Calu3 (cell line): ENCODE measurements at regions of chr10 and their contacts with region 1.

Region 1: DNA sequence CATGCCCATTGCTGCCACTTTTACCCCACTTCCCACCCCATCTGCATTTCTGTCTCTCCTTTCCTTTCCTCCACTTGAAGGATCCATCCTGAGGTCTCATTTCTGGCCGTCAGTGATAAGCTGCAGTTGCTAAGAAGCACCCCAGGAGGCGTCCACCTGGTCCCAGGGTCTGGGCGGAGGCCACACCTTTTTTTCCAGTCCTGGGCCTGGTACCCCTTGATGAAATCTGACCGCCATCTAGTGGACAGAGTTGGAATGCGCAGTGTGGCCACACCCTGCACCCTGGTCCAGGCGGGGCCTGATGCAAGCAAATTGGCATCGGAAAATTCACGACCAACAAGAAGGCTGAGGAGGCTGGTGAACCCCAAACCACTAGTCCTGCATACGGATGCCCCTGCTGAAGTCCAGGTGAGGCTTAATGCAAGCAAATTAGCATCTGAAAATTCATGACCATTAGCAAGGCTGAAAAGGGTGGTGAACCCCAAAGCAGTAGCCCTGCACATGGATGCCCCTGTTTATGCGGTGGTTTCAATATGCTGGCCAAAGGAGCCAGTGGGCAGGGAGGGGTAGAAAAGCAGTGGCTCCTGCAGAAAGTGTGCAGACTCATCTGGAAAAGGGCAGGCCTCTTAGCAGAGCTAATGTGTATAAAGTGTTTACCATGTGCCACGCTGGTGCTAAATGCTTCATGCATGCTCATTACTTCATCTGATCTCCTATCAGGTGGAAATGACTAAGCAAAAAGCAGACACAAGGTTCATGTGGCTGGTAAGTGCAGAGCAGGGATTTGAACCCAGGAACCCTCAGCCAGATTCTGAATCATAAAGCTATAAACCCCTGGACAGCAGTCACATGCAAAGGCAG is 43.2 kb downstream of the GPAM start:
- DNase-seq: peak; percentile 85
- H3K4me3 Mint-ChIP-seq: no peak overlapping the region
- H3K27ac Mint-ChIP-seq: no peak overlapping the region
- H3K4me1 Mint-ChIP-seq: no peaks in the 10 kb centered on the region
- H3K27me3 Mint-ChIP-seq: peaks cover 21% of the 10 kb centered on the region
- CTCF ChIP-seq: peak; percentile 83

Region 2: DNA sequence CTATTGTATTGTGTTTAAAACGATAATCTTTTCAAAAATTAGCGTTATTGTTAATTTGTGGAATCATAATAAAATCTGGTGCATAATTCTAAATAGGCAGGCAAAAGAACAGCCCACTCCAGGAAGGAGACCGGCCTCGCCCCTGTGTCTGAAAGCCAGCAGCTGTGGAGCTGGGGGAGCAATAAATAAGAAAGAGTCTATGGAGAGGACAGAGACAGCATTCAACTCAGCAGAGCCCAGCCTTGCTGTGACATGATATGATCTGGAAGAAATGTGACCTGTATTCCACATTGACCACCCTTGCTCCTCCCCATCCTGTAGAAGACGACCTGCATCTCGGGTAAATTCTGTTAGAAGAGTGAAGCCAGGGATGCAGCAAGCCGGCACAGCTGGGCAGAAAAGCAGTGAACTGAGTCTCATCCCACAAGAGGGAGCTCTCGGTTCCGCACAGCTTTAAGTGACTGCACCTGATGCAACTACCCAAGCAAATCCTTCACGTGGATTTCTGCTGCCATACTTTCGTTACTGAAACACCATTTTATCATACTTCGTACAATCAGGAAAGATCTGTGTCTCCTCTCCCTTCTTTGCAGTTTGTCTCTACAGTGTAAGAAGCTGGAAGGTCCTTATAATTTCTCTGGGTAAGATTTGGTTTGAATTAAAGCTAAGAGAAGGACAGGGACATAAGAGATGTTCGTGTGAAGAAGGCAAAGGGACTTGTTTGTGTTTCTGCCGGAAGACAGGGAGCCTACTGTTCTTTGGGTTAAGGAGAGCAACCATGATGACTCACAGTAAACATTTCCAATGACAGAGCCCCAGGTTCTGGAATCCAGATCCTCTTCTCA is 383.9 kb before region 1 on chr10:
- CTCF ChIA-PET with region 1: interaction called, 10 read pairs
- intact Hi-C with region 1: loop called (anchors 5 kb)
- DNase-seq: peak; percentile 50
- H3K4me3 Mint-ChIP-seq: no peak overlapping the region
- H3K27ac Mint-ChIP-seq: no peak overlapping the region
- H3K4me1 Mint-ChIP-seq: no peaks in the 10 kb centered on the region
- H3K27me3 Mint-ChIP-seq: peaks cover 13% of the 10 kb centered on the region
- CTCF ChIP-seq: no peak

Region 3: DNA sequence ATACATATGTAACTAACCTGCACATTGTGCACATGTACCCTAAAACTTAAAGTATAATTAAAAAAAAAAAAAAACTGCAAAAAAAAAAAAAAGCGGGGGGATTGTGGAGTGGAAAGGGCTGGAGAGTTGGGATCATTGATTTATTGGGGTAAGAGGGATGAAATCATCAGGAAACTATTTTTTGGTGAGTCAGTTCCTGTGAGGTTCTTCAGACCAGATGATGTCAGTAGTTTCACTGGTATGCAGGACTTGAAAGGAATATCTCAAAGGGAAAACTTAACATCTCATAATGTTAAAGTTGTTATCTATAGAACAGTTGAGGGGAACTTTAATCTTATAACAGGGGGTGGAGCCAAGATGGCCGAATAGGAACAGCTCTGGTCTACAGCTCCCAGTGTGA is 110.2 kb after region 1 on chr10:
- CTCF ChIA-PET with region 1: no interaction called
- intact Hi-C with region 1: no loop called
- DNase-seq: no peak
- H3K4me3 Mint-ChIP-seq: no peak overlapping the region
- H3K27ac Mint-ChIP-seq: no peak overlapping the region
- H3K4me1 Mint-ChIP-seq: no peaks in the 10 kb centered on the region
- H3K27me3 Mint-ChIP-seq: no peaks in the 10 kb centered on the region
- CTCF ChIP-seq: no peak

Region 4: GRCh38 chr10:112307358-112308124 is 167.2 kb after region 1 on chr10:
- CTCF ChIA-PET with region 1: interaction called, 3 read pairs
- intact Hi-C with region 1: loop called (anchors 10 kb)
- DNase-seq: peak; percentile 52
- H3K4me3 Mint-ChIP-seq: no peak overlapping the region
- H3K27ac Mint-ChIP-seq: no peak overlapping the region
- H3K4me1 Mint-ChIP-seq: no peaks in the 10 kb centered on the region
- H3K27me3 Mint-ChIP-seq: peaks cover 18% of the 10 kb centered on the region
- CTCF ChIP-seq: peak; percentile 63

Region 5: DNA sequence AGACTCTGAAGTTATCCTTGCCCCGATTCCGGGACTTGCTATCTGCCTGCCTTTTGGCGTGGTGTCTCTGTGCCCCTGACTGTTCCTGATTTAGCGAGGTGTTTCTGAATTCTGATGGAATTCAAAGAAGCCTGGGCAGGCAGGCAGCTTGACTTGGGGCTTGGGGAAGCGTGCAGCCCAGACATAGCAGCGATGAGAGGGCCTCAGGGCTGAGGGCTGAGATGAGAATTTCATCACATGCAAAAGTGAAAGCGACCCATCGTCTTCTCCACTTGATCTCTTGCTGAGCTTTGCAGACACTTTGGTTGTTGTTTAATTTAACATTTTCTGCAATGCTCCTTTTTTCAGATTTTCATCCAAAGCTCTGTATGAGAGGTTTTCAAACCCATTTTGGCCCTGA is 867.5 kb after region 1 on chr10:
- CTCF ChIA-PET with region 1: no interaction called
- intact Hi-C with region 1: no loop called
- DNase-seq: no peak
- H3K4me3 Mint-ChIP-seq: no peak overlapping the region
- H3K27ac Mint-ChIP-seq: no peak overlapping the region
- H3K4me1 Mint-ChIP-seq: peaks cover 39% of the 10 kb centered on the region
- H3K27me3 Mint-ChIP-seq: no peaks in the 10 kb centered on the region
- CTCF ChIP-seq: no peak